Mammary epithelial cell (primary cell): ENCODE measurements at regions of chr16 and their contacts with region 1.

Region 1: GRCh38 chr16:68636064-68636560 is 9.0 kb upstream of the CDH3 start:
- DNase-seq: peak; percentile 97
- H3K4me3 ChIP-seq: peak overlapping the region in 2 of 3 experiments; percentile 14 to 32
- H3K27ac ChIP-seq: peak overlapping the region; percentile 97
- H3K4me1 ChIP-seq: peaks cover 25% of the 10 kb centered on the region
- H3K27me3 ChIP-seq: no peaks in the 10 kb centered on the region
- CTCF ChIP-seq: no peak

Region 2: DNA sequence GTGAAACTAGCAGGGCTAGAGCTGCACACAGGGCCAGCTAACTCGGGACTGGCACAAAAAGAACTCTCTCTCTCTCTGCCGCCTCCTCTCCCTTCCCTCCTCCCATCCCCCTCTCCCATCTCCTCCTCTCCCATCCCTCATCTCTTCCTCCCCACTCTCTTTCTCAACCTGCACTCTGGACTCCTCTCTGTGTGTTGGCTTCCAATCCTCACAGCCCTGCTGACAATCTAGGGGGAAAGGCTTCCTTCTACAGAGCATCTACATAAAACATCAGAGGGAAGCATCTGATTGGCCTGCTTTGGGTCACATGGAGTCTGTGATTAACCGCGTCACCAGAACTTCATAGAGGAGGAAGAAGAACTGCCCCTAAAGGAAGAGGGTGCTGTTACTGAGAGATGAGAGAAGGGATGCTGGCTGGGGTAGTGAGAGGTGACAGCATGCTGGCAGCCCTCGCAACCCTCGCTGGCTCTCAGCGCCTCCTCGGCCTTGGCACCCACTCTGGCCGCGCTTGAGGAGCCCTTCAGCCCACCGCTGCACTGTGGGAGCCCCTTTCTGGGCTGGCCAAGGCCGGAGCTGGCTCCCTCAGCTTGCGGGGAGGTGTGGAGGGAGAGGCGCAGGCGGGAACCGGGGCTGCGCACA is 109.8 kb before region 1 on chr16:
- CTCF ChIA-PET with region 1: no interaction called
- dilution Hi-C with region 1: no loop called
- in situ Hi-C with region 1: no loop called
- intact Hi-C with region 1: no loop called
- DNase-seq: no peak
- H3K4me3 ChIP-seq: no peak overlapping the region
- H3K27ac ChIP-seq: no peak overlapping the region
- H3K4me1 ChIP-seq: peaks cover 19% of the 10 kb centered on the region
- H3K27me3 ChIP-seq: no peaks in the 10 kb centered on the region
- CTCF ChIP-seq: no peak

Region 3: DNA sequence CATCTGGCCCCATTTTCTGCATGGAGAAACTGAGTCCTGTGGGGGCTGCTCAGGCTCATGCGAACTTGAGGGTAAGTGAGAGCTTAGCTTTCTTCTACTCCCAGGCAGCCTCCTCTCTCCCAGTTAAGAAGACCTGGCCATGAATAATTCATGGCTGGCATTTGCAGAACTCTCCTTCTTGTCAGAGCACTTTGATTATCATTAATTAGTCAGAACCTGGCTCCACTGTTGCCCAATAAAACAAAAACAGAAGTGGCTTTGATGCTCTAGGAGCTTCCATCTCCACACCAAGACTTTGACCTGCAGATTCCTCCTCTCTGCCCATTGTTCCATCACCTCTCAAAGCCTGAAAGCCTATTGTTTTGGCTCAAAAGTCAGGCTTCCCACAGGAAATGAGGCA is 36.5 kb before region 1 on chr16:
- CTCF ChIA-PET with region 1: no interaction called
- dilution Hi-C with region 1: loop called (anchors 5 kb)
- in situ Hi-C with region 1: no loop called
- intact Hi-C with region 1: no loop called
- DNase-seq: peak; percentile 25
- H3K4me3 ChIP-seq: no peak overlapping the region
- H3K27ac ChIP-seq: no peak overlapping the region
- H3K4me1 ChIP-seq: peaks cover under 1% of the 10 kb centered on the region
- H3K27me3 ChIP-seq: no peaks in the 10 kb centered on the region
- CTCF ChIP-seq: no peak